GM12878 (cell line): ENCODE measurements at regions of chr9 and their contacts with region 1.

Region 1: DNA sequence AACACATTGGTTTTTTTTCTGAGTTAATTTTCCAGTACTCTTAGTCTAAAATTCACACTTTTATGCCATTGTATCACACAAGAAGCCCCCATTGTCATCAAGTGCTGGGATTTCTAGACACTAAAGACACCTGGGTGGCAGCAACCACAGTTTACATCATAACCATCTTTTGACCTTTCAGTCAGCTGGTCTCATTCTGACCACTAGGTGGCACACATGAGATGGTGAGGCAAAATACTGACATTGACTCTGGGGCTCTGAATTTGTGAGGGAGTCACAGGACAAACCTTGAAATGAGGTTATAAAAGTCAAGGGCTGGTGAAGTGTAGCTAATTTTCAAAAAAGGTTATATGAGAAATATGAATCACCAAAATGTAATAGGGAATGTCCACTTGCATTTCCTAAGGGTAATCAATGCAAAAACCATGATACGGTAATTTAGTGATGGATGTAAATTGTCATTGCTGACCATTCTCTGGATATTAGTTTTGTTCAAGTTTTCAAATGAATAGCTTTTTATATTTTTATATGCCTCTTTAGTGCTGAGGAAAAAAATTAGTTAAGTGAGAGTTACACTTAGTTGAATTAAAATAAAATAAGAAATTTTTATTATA is 229.4 kb downstream of the DMAC1 start:
- DNase-seq: peak; percentile 30
- ATAC-seq: peak; percentile 93
- H3K4me3 ChIP-seq: no peak overlapping the region
- H3K27ac ChIP-seq: no peak overlapping the region
- H3K4me1 ChIP-seq: no peaks in the 10 kb centered on the region
- H3K27me3 ChIP-seq: no peaks in the 10 kb centered on the region; a peak in 2 of 4 replicates
- CTCF ChIP-seq: peak; percentile 82 to 86 (median 84)
- EP300 ChIP-seq: no peak
- POLR2A ChIP-seq: no peak
- RAD21 ChIP-seq: peak; percentile 92

Region 2: DNA sequence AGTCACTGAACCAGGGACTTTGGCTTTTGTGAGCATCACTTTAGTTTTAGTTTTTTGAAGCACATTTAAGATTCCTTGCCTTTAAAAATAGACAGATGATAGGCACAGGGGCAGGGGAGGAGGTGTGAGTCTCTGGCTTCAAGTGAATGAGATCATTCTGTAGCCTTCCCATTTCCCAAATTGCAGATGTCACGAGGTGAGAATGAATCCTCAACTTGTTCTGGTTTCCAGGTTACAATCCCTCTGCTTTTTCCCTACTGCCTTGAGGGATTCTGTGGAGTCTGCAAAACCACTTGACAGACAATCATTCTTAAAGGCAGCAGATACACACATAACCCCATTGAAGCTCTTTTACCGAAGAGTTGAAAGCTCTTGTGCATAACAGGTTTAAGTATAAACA is 103.0 kb before region 1 on chr9:
- CTCF ChIA-PET with region 1: no interaction called
- POLR2A ChIA-PET with region 1: no interaction called
- RAD21 ChIA-PET with region 1: no interaction called
- SMC1A ChIA-PET with region 1: no interaction called
- in situ Hi-C with region 1: no loop called
- intact Hi-C with region 1: no loop called
- DNase-seq: no peak
- ATAC-seq: no peak
- H3K4me3 ChIP-seq: no peak overlapping the region
- H3K27ac ChIP-seq: no peak overlapping the region
- H3K4me1 ChIP-seq: no peaks in the 10 kb centered on the region
- H3K27me3 ChIP-seq: no peaks in the 10 kb centered on the region
- CTCF ChIP-seq: no peak
- EP300 ChIP-seq: no peak
- POLR2A ChIP-seq: no peak
- RAD21 ChIP-seq: no peak

Region 3: DNA sequence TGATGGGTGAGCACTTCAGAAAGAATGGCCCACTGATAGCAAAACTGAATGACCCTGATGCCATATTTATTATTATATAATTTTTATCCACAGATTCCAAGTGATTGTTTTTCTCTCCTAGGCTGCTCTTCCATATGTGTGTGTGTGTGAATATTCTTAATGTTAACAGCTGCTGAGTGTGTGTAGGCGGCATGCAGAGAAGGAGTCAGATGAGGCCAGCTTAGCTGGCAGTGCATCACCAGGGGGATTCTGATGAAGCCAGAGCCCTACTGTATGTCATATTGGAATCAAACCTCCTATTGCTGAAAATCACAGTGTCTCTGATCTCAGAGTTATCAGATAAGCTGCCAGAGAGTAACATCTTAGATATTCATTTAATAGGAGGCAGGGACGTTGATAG is 52.3 kb after region 1 on chr9:
- CTCF ChIA-PET with region 1: no interaction called
- POLR2A ChIA-PET with region 1: no interaction called
- RAD21 ChIA-PET with region 1: no interaction called
- SMC1A ChIA-PET with region 1: no interaction called
- in situ Hi-C with region 1: no loop called
- intact Hi-C with region 1: no loop called
- DNase-seq: no peak
- ATAC-seq: no peak
- H3K4me3 ChIP-seq: no peak overlapping the region
- H3K27ac ChIP-seq: no peak overlapping the region
- H3K4me1 ChIP-seq: no peaks in the 10 kb centered on the region
- H3K27me3 ChIP-seq: no peaks in the 10 kb centered on the region
- CTCF ChIP-seq: no peak
- EP300 ChIP-seq: no peak
- POLR2A ChIP-seq: no peak
- RAD21 ChIP-seq: no peak

Region 4: DNA sequence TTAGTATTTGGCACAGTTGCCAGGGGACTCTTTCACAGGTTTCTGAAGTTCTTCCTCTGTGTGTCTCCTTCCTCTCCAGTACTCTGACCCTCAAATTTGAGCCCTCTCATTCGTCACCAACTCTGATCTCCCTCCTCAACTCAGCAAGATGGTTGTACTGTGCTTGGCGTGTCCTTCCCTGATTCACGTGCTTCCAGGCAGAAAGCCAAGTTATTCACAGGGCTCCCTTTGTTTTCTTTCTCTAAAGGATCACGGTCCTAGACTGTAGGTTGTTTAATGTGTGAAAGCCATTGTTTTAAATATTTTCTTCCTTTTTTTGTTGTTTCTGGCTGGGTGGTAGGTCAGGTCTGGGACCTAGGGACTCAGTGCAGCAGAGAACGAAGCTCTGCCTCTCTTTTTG is 86.4 kb after region 1 on chr9:
- CTCF ChIA-PET with region 1: interaction called, 15 read pairs
- POLR2A ChIA-PET with region 1: no interaction called
- RAD21 ChIA-PET with region 1: no interaction called
- SMC1A ChIA-PET with region 1: no interaction called
- in situ Hi-C with region 1: no loop called
- intact Hi-C with region 1: no loop called
- DNase-seq: no peak
- ATAC-seq: no peak
- H3K4me3 ChIP-seq: no peak overlapping the region
- H3K27ac ChIP-seq: no peak overlapping the region
- H3K4me1 ChIP-seq: no peaks in the 10 kb centered on the region
- H3K27me3 ChIP-seq: no peaks in the 10 kb centered on the region
- CTCF ChIP-seq: no peak
- EP300 ChIP-seq: no peak
- POLR2A ChIP-seq: no peak
- RAD21 ChIP-seq: no peak

Region 5: GRCh38 chr9:7834531-7834930 is 264.3 kb after region 1 on chr9:
- CTCF ChIA-PET with region 1: interaction called, 5 read pairs
- POLR2A ChIA-PET with region 1: no interaction called
- RAD21 ChIA-PET with region 1: no interaction called
- SMC1A ChIA-PET with region 1: no interaction called
- in situ Hi-C with region 1: loop called (anchors 25 kb)
- intact Hi-C with region 1: loop called (anchors 5 kb)
- DNase-seq: no peak
- ATAC-seq: no peak
- H3K4me3 ChIP-seq: no peak overlapping the region
- H3K27ac ChIP-seq: no peak overlapping the region
- H3K4me1 ChIP-seq: no peaks in the 10 kb centered on the region
- H3K27me3 ChIP-seq: no peaks in the 10 kb centered on the region
- CTCF ChIP-seq: no peak
- EP300 ChIP-seq: no peak
- POLR2A ChIP-seq: no peak
- RAD21 ChIP-seq: no peak

Region 6: GRCh38 chr9:8895861-8896224 is 1325.6 kb after region 1 on chr9:
- CTCF ChIA-PET with region 1: interaction called, 21 read pairs
- POLR2A ChIA-PET with region 1: no interaction called
- RAD21 ChIA-PET with region 1: interaction called, 5 read pairs
- SMC1A ChIA-PET with region 1: interaction called, 5 read pairs
- in situ Hi-C with region 1: loop called (anchors 10 kb)
- intact Hi-C with region 1: loop called (anchors 5 kb)
- DNase-seq: no peak
- ATAC-seq: peak; percentile 56
- H3K4me3 ChIP-seq: no peak overlapping the region
- H3K27ac ChIP-seq: no peak overlapping the region
- H3K4me1 ChIP-seq: no peaks in the 10 kb centered on the region
- H3K27me3 ChIP-seq: no peaks in the 10 kb centered on the region
- CTCF ChIP-seq: peak; percentile 36 to 50 (median 43); a peak in 5 of 6 replicates
- EP300 ChIP-seq: no peak
- POLR2A ChIP-seq: no peak
- RAD21 ChIP-seq: peak; percentile 67